Endothelial cell of umbilical vein (primary cell): ENCODE measurements at regions of chr13 and their contacts with region 1.

Region 1: GRCh38 chr13:95191821-95192563 is 109.3 kb downstream of the ABCC4 start:
- DNase-seq: peak; percentile 78
- H3K4me3 ChIP-seq: no peak overlapping the region
- H3K27ac ChIP-seq: no peak overlapping the region
- H3K4me1 ChIP-seq: no peaks in the 10 kb centered on the region
- H3K27me3 ChIP-seq: no peaks in the 10 kb centered on the region
- CTCF ChIP-seq: peak; percentile 90 to 97
- POLR2A ChIP-seq: no peak

Region 2: DNA sequence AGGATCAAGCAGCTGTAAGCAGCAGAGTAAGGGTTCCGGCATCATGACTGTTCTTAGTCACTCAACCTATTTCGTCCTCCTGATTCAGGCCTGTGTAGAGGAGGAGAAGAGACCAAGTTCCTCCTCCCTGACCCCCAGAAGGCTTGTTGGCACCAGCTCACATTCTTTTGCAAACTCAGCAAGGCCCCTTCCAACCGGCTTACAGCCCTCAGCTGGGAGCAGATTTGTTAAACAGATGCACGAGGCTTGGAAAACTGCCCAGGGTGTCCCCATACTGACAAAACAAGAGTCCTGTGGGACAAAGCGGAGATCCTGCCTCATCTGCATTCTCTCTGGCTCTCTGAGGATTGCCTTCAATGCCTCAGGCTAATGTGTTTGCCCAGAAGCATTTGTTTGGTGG is 366.5 kb before region 1 on chr13:
- CTCF ChIA-PET with region 1: no interaction called
- POLR2A ChIA-PET with region 1: no interaction called
- dilution Hi-C with region 1: no loop called
- intact Hi-C with region 1: no loop called
- DNase-seq: no peak
- H3K4me3 ChIP-seq: no peak overlapping the region
- H3K27ac ChIP-seq: no peak overlapping the region
- H3K4me1 ChIP-seq: no peaks in the 10 kb centered on the region
- H3K27me3 ChIP-seq: peaks cover 0 to 15% of the 10 kb centered on the region in 2 experiments
- CTCF ChIP-seq: no peak
- POLR2A ChIP-seq: no peak

Region 3: GRCh38 chr13:94967183-94968039 is 224.6 kb before region 1 on chr13:
- CTCF ChIA-PET with region 1: no interaction called
- POLR2A ChIA-PET with region 1: no interaction called
- dilution Hi-C with region 1: no loop called
- intact Hi-C with region 1: no loop called
- DNase-seq: peak; percentile 12
- H3K4me3 ChIP-seq: peak overlapping the region in 1 of 3 experiments; percentile 19
- H3K27ac ChIP-seq: no peak overlapping the region
- H3K4me1 ChIP-seq: peaks cover 6% of the 10 kb centered on the region
- H3K27me3 ChIP-seq: peaks cover 56 to 99% of the 10 kb centered on the region in 2 experiments
- CTCF ChIP-seq: no peak
- POLR2A ChIP-seq: no peak

Region 4: GRCh38 chr13:95256086-95256485 is 64.1 kb after region 1 on chr13:
- CTCF ChIA-PET with region 1: interaction called, 12 read pairs
- POLR2A ChIA-PET with region 1: no interaction called
- dilution Hi-C with region 1: no loop called
- intact Hi-C with region 1: no loop called
- DNase-seq: peak; percentile 85
- H3K4me3 ChIP-seq: no peak overlapping the region
- H3K27ac ChIP-seq: peak overlapping the region; percentile 47
- H3K4me1 ChIP-seq: peaks cover 36% of the 10 kb centered on the region
- H3K27me3 ChIP-seq: no peaks in the 10 kb centered on the region
- CTCF ChIP-seq: no peak
- POLR2A ChIP-seq: no peak

Region 5: GRCh38 chr13:95295026-95295425 is 103.0 kb after region 1 on chr13:
- CTCF ChIA-PET with region 1: interaction called, 69 read pairs
- POLR2A ChIA-PET with region 1: no interaction called
- dilution Hi-C with region 1: no loop called
- intact Hi-C with region 1: loop called (anchors 1 kb)
- DNase-seq: no peak
- H3K4me3 ChIP-seq: no peak overlapping the region
- H3K27ac ChIP-seq: no peak overlapping the region
- H3K4me1 ChIP-seq: peaks cover 4% of the 10 kb centered on the region
- H3K27me3 ChIP-seq: no peaks in the 10 kb centered on the region
- CTCF ChIP-seq: no peak
- POLR2A ChIP-seq: no peak

Region 6: DNA sequence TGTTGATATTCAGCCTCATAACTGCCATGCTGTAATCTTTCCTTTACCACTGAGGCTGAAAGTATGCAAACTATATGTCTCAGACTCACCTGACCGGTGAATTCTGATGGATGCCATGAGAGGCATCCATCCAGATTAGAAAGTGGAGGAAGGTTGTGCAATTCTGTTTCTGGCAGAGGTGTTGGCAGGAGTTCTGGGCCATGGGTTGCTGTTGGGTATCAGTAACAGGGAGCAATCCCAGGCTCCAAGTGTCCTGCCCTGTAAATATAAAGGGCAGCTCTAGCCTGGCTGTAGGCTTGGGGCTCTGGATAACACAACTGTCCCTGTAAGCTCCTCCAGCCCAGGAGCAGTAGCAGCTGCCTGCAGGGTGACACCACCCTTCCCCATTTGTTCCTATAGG is 186.6 kb after region 1 on chr13:
- CTCF ChIA-PET with region 1: interaction called, 399 read pairs
- POLR2A ChIA-PET with region 1: interaction called, 3 read pairs
- dilution Hi-C with region 1: no loop called
- intact Hi-C with region 1: loop called (anchors 1 kb)
- DNase-seq: no peak
- H3K4me3 ChIP-seq: no peak overlapping the region
- H3K27ac ChIP-seq: no peak overlapping the region
- H3K4me1 ChIP-seq: peaks cover 3% of the 10 kb centered on the region
- H3K27me3 ChIP-seq: peaks cover 2 to 6% of the 10 kb centered on the region in 2 experiments
- CTCF ChIP-seq: no peak
- POLR2A ChIP-seq: no peak

Region 7: DNA sequence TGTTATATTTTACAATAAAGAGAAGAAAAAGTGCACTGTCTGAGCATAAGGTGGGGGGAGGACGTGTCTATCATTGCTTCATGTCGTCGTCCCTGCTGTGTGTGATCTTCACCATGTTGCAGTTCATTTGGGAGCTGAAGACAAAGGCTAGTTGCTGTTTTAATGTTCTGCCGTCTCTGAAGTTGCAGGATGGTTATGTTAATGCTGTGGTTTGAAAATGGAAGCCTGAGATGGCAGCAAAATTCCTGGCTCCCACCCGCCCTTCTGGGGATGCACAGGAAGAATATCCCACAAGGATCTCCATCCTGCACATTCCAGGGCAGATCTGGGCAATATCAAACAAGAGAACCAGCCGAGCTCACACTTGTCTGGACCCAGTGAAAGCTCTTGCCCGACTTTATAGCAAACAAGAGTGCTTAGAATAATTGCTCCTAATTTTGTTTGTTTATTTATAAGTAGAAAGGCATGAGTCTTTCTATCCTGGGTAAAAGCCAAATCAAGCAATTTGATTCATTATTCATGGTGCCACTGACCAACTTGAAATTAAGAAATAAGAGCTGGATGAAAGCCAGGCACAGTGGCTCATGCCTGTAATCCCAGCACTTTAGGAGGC is 219.5 kb after region 1 on chr13:
- CTCF ChIA-PET with region 1: interaction called, 633 read pairs
- POLR2A ChIA-PET with region 1: no interaction called
- dilution Hi-C with region 1: no loop called
- intact Hi-C with region 1: no loop called
- DNase-seq: no peak
- H3K4me3 ChIP-seq: no peak overlapping the region
- H3K27ac ChIP-seq: no peak overlapping the region
- H3K4me1 ChIP-seq: no peaks in the 10 kb centered on the region
- H3K27me3 ChIP-seq: no peaks in the 10 kb centered on the region
- CTCF ChIP-seq: no peak
- POLR2A ChIP-seq: no peak

Region 8: GRCh38 chr13:95660981-95661581 is 469.1 kb after region 1 on chr13:
- CTCF ChIA-PET with region 1: interaction called, 7 read pairs
- POLR2A ChIA-PET with region 1: interaction called, 4 read pairs
- dilution Hi-C with region 1: no loop called
- intact Hi-C with region 1: loop called (anchors 2 kb)
- DNase-seq: peak; percentile 61
- H3K4me3 ChIP-seq: no peak overlapping the region
- H3K27ac ChIP-seq: no peak overlapping the region
- H3K4me1 ChIP-seq: no peaks in the 10 kb centered on the region
- H3K27me3 ChIP-seq: peaks cover 8 to 10% of the 10 kb centered on the region in 2 experiments
- CTCF ChIP-seq: peak; percentile 45 to 52
- POLR2A ChIP-seq: no peak